T-cell (primary cell): ENCODE measurements at regions of chr1 and their contacts with region 1.

Region 1: DNA sequence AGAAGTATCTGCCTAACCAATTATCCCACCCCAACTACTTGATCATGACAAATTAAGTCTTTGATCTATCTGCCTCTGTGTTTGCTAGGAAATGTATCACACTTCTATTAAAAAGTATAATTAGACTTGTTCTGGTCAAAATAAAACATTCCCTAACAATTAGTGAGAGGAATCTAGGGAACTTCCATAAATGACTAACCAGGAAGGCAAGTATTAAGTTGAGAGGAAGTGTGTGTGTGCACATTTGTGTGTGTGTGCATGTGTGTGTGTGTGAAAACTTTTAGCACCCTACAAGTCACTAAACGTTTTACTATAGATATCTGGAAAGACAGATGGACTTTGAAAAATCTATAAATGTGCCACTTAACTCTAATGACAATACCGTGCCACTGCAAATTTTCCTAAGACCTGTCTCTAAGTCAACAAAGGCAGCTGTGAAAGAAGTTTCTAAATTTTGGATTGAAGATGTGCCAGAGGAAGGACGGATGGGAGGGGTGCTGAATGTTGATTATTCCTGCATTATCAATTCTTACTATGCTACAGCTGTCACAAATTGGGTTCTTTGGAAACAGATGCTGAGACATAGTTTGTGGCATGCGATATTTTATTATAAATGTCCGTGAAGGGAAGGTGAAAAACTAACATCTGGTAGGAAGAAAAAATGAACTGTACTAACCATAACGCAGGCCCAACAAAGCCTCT is 567.1 kb downstream of the PTPRC start:
- DNase-seq: no peak
- ATAC-seq: no peak
- H3K4me3 ChIP-seq: no peak overlapping the region
- H3K4me3 Mint-ChIP-seq: no peak overlapping the region
- H3K27ac ChIP-seq: no peak overlapping the region
- H3K27ac Mint-ChIP-seq: no peak overlapping the region
- H3K4me1 ChIP-seq: no peaks in the 10 kb centered on the region
- H3K4me1 Mint-ChIP-seq: peaks cover 0 to 4% (median 4%) of the 10 kb centered on the region in 3 donors
- H3K27me3 ChIP-seq: no peaks in the 10 kb centered on the region
- H3K27me3 Mint-ChIP-seq: no peaks in the 10 kb centered on the region

Region 2: DNA sequence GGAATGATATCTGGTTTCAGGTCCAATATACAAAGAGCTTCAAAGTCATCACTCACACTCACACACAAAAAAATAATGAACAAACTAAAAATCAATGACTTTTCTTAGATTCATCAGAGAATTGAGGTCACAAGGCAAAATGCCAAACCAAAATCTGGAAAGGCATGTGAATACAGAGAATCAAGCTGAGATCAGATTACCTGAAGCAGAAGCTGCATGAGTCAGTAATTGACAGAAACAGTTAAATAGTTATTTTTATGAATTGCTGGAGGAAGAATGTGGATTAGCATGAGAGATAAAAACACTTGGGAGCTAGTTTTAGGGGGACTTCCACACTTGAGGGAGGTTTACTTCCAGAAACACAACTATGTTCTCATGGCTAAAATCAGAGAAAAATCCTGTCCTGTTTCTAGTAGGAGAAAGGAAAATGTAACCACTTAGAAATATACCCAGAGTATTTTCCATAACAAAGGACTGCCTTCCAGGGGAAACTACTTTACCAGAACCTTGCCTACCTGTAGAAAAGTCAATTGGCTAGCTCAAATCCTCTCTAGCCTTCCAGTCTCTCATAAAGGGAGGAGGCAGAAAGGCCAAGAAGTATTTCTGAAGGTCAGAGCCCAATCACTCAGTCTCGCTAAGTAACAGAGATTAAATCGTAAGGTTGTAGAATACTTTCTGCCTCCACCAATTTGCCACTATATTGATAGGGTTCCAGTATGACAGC is 285.1 kb after region 1 on chr1:
- CTCF ChIA-PET with region 1: no interaction called
- POLR2A ChIA-PET with region 1: interaction called in 1 of 2 experiments, 11 read pairs
- DNase-seq: no peak
- ATAC-seq: no peak
- H3K4me3 ChIP-seq: no peak overlapping the region
- H3K4me3 Mint-ChIP-seq: no peak overlapping the region
- H3K27ac ChIP-seq: no peak overlapping the region
- H3K27ac Mint-ChIP-seq: no peak overlapping the region
- H3K4me1 ChIP-seq: no peaks in the 10 kb centered on the region
- H3K4me1 Mint-ChIP-seq: no peaks in the 10 kb centered on the region
- H3K27me3 ChIP-seq: no peaks in the 10 kb centered on the region
- H3K27me3 Mint-ChIP-seq: peaks cover 3 to 4% of the 10 kb centered on the region in 2 donors